ENCODE measurements at regions of chr7 and their contacts with region 1.

Region 1: GRCh38 chr7:4610768-4611467 is 71.2 kb upstream of the FOXK1 start:
- DNase-seq: peak; percentile 71
- H3K4me3 Mint-ChIP-seq: no peak overlapping the region
- H3K27ac Mint-ChIP-seq: no peak overlapping the region
- H3K4me1 Mint-ChIP-seq: peaks cover 13% of the 10 kb centered on the region
- H3K27me3 Mint-ChIP-seq: no peaks in the 10 kb centered on the region

Region 2: DNA sequence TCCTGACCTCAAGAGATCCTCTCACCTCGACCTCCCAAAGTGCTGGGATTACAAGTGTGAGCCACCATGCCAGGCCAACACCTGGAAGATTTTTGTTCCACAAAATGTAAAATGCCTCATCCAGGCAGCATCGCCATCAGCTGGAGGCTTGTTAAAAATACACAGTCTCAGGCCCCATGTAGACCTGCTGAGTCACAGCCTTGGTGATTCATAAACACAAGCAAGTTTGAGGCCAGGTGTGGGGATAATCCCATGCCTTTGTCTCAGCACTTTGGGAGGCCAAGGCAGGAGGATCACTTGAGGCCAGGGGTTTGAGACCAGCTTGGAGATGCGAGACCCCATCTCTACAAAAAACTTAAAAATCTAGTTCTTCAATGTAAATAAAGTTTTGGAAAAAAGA is 22.1 kb after region 1 on chr7:
- CTCF ChIA-PET with region 1: no interaction called
- intact Hi-C with region 1: loop called (anchors 1 kb)
- DNase-seq: peak; percentile 72
- H3K4me3 Mint-ChIP-seq: no peak overlapping the region
- H3K27ac Mint-ChIP-seq: no peak overlapping the region
- H3K4me1 Mint-ChIP-seq: peaks cover 2% of the 10 kb centered on the region
- H3K27me3 Mint-ChIP-seq: peaks cover 4% of the 10 kb centered on the region

Region 3: DNA sequence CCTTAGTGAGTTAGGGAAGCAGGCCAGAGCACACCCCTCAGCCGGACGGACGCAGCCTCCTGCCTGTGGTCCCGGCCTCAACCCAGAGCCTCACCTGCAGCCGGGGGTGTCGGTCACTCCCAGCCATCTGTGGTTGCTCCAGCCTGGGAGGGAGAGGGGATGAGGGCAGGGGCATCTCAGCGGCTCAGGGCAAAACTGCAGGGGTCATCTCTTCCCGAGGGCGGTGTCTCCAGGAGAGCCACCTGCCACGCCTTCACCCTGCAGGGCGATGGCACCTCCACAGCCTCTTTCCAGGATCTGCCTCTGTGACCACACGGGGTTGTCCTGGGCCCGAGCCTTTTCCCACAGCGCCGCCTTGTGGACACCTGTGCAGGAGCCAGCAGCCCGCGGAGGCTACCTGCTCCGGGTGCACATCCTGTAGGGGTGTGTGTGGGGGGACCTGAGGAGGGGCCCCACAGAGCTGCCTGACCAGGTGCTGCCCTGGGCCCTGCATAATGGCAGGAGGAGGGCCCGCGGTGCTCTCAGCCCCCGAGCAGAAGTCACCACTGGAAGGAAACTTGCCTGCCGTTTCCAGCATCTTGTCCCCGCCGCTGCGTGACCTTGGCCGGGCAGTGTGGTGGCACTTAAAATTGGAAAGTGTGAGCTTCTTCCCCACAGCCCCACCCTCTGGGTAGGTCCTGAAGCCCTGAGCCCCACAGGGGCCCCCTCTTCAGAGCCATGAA is 143.0 kb after region 1 on chr7:
- CTCF ChIA-PET with region 1: interaction called, 18 read pairs
- intact Hi-C with region 1: loop called (anchors 1 kb)
- DNase-seq: peak; percentile 93
- H3K4me3 Mint-ChIP-seq: no peak overlapping the region
- H3K27ac Mint-ChIP-seq: no peak overlapping the region
- H3K4me1 Mint-ChIP-seq: peaks cover 21% of the 10 kb centered on the region
- H3K27me3 Mint-ChIP-seq: no peaks in the 10 kb centered on the region

Measured in activated naive CD4-positive, alpha-beta T cell treated with anti-CD3 and anti-CD28 coated beads for 36 hours (primary cell).